AG04450 (cell line): ENCODE measurements at regions of chr7 and their contacts with region 1.

Region 1: GRCh38 chr7:13524076-13524475 is 465.4 kb downstream of the ETV1 start:
- DNase-seq: no peak
- H3K4me3 ChIP-seq: no peak overlapping the region
- H3K27ac ChIP-seq: no peak overlapping the region
- H3K27me3 ChIP-seq: no peaks in the 10 kb centered on the region
- CTCF ChIP-seq: no peak

Region 2: GRCh38 chr7:12821746-12822145 is 702.3 kb before region 1 on chr7:
- CTCF ChIA-PET with region 1: no interaction called
- POLR2A ChIA-PET with region 1: no interaction called
- DNase-seq: no peak
- H3K4me3 ChIP-seq: no peak overlapping the region
- H3K27ac ChIP-seq: no peak overlapping the region
- H3K27me3 ChIP-seq: no peaks in the 10 kb centered on the region
- CTCF ChIP-seq: no peak

Region 3: GRCh38 chr7:13279854-13280435 is 244.1 kb before region 1 on chr7:
- CTCF ChIA-PET with region 1: interaction called, 16 read pairs
- POLR2A ChIA-PET with region 1: no interaction called
- DNase-seq: peak; percentile 3
- H3K4me3 ChIP-seq: no peak overlapping the region
- H3K27ac ChIP-seq: no peak overlapping the region
- H3K27me3 ChIP-seq: no peaks in the 10 kb centered on the region
- CTCF ChIP-seq: peak; percentile 33

Region 4: DNA sequence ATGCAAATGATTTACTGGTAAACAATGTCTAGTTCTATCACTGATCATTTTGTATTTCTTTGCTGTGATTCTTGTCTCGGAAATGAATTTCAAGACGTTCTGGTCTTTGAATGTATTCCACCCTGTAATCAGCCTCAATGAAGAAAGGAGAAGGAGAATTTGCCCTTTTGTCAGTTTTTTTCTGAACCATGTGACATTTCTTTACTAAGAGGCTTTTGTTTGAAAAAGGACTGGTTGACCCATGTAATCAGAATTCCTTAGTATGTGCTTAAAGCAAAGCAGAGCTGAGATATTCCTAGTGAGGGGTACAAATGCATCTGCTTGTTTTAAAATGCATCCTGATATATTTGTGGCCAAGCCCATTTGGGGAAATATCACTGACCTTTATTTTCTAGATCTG is 116.2 kb before region 1 on chr7:
- CTCF ChIA-PET with region 1: no interaction called
- POLR2A ChIA-PET with region 1: no interaction called
- DNase-seq: no peak
- H3K4me3 ChIP-seq: no peak overlapping the region
- H3K27ac ChIP-seq: no peak overlapping the region
- H3K27me3 ChIP-seq: no peaks in the 10 kb centered on the region
- CTCF ChIP-seq: no peak

Region 5: GRCh38 chr7:13577566-13578145 is 53.6 kb after region 1 on chr7:
- CTCF ChIA-PET with region 1: interaction called, 13 read pairs
- POLR2A ChIA-PET with region 1: no interaction called
- DNase-seq: no peak
- H3K4me3 ChIP-seq: no peak overlapping the region
- H3K27ac ChIP-seq: no peak overlapping the region
- H3K27me3 ChIP-seq: no peaks in the 10 kb centered on the region
- CTCF ChIP-seq: no peak

Region 6: GRCh38 chr7:13724977-13725566 is 201.0 kb after region 1 on chr7:
- CTCF ChIA-PET with region 1: interaction called, 16 read pairs
- POLR2A ChIA-PET with region 1: no interaction called
- DNase-seq: no peak
- H3K4me3 ChIP-seq: no peak overlapping the region
- H3K27ac ChIP-seq: no peak overlapping the region
- H3K27me3 ChIP-seq: no peaks in the 10 kb centered on the region
- CTCF ChIP-seq: no peak

Region 7: GRCh38 chr7:13990984-13991790 is 467.1 kb after region 1 on chr7:
- CTCF ChIA-PET with region 1: interaction called, 13 read pairs
- POLR2A ChIA-PET with region 1: no interaction called
- DNase-seq: peak; percentile 95
- H3K4me3 ChIP-seq: peak overlapping the region; percentile 81
- H3K27ac ChIP-seq: peak overlapping the region; percentile 94
- H3K27me3 ChIP-seq: no peaks in the 10 kb centered on the region
- CTCF ChIP-seq: no peak